Natural killer cell (primary cell): ENCODE measurements at regions of chr1 and their contacts with region 1.

Region 1: GRCh38 chr1:66350001-66350547 is 183.9 kb upstream of the SGIP1 start:
- DNase-seq: peak in 1 of 2 donors; percentile 84
- ATAC-seq: peak; percentile 63 to 86 (median 82)
- H3K4me3 ChIP-seq: no peak overlapping the region
- H3K4me3 Mint-ChIP-seq: peak overlapping the region; percentile 76
- H3K27ac ChIP-seq: peak overlapping the region; percentile 92
- H3K27ac Mint-ChIP-seq: peak overlapping the region; percentile 86
- H3K4me1 ChIP-seq: peaks cover 23% of the 10 kb centered on the region
- H3K4me1 Mint-ChIP-seq: peaks cover 39 to 56% of the 10 kb centered on the region in 2 donors
- H3K27me3 ChIP-seq: no peaks in the 10 kb centered on the region
- H3K27me3 Mint-ChIP-seq: no peaks in the 10 kb centered on the region
- CTCF ChIP-seq: no peak

Region 2: GRCh38 chr1:66288048-66288447 is 62.0 kb before region 1 on chr1:
- intact Hi-C with region 1: loop called (anchors 5 kb)
- DNase-seq: peak in 1 of 2 donors; percentile 46
- ATAC-seq: peak in 2 of 3 donors; percentile 76 to 78
- H3K4me3 ChIP-seq: no peak overlapping the region
- H3K4me3 Mint-ChIP-seq: no peak overlapping the region
- H3K27ac ChIP-seq: no peak overlapping the region
- H3K27ac Mint-ChIP-seq: no peak overlapping the region
- H3K4me1 ChIP-seq: peaks cover 19% of the 10 kb centered on the region
- H3K4me1 Mint-ChIP-seq: peaks cover 22% of the 10 kb centered on the region in 2 donors
- H3K27me3 ChIP-seq: no peaks in the 10 kb centered on the region
- H3K27me3 Mint-ChIP-seq: peaks cover 16 to 23% of the 10 kb centered on the region in 2 donors
- CTCF ChIP-seq: no peak

Region 3: DNA sequence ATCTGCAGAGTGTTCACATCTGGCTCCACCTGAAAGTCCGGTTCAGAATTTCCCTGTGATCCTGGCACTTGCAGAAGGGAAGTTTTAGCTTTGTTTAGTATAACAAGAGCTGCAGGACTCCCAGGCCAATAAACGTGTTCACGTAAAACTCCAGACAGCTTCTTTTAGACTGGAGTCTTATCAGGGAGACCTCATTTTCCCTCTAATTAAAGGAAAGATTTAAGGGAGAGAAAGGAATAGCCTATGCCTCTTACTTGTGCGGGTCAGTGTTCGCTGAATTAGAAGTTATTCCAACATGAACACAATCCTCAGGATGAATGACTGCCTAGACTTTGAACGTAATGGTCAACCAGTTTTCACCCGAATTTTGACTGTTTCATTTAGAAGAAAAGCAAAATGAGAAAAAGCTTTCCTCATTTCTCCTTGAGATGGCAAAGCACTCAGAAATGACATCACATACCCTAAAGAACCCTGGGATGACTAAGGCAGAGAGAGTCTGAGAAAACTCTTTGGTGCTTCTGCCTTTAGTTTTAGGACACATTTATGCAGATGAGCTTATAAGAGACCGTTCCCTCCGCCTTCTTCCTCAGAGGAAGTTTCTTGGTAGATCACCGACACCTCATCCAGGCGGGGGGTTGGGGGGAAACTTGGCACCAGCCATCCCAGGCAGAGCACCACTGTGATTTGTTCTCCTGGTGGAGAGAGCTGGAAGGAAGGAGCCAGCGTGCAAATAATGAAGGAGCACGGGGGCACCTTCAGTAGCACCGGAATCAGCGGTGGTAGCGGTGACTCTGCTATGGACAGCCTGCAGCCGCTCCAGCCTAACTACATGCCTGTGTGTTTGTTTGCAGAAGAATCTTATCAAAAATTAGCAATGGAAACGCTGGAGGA is 18.2 kb before region 1 on chr1:
- intact Hi-C with region 1: loop called (anchors 2 kb)
- DNase-seq: peak; percentile 26 to 68
- ATAC-seq: peak; percentile 26 to 42 (median 40)
- H3K4me3 ChIP-seq: peak overlapping the region; percentile 62
- H3K4me3 Mint-ChIP-seq: peak overlapping the region; percentile 93
- H3K27ac ChIP-seq: peak overlapping the region; percentile 97
- H3K27ac Mint-ChIP-seq: peak overlapping the region; percentile 75 to 95
- H3K4me1 ChIP-seq: peaks cover 35% of the 10 kb centered on the region
- H3K4me1 Mint-ChIP-seq: peaks cover 71 to 75% of the 10 kb centered on the region in 2 donors
- H3K27me3 ChIP-seq: no peaks in the 10 kb centered on the region
- H3K27me3 Mint-ChIP-seq: peaks cover 0 to 2% of the 10 kb centered on the region in 2 donors
- CTCF ChIP-seq: no peak

Region 4: GRCh38 chr1:66446261-66447001 is 96.4 kb after region 1 on chr1:
- intact Hi-C with region 1: loop called (anchors 10 kb)
- DNase-seq: peak in 1 of 2 donors; percentile 89
- ATAC-seq: peak; percentile 73 to 84 (median 80)
- H3K4me3 ChIP-seq: no peak overlapping the region
- H3K4me3 Mint-ChIP-seq: peak overlapping the region; percentile 43
- H3K27ac ChIP-seq: peak overlapping the region; percentile 56
- H3K27ac Mint-ChIP-seq: peak overlapping the region; percentile 65 to 75
- H3K4me1 ChIP-seq: peaks cover 10% of the 10 kb centered on the region
- H3K4me1 Mint-ChIP-seq: peaks cover 14% of the 10 kb centered on the region in 2 donors
- H3K27me3 ChIP-seq: no peaks in the 10 kb centered on the region
- H3K27me3 Mint-ChIP-seq: peaks cover 4 to 26% of the 10 kb centered on the region in 2 donors
- CTCF ChIP-seq: peak; percentile 74